CD4-positive, alpha-beta T cell (primary cell): ENCODE measurements at regions of chr1 and their contacts with region 1.

Region 1: GRCh38 chr1:65687428-65688214 is 105.1 kb upstream of the PDE4B start:
- DNase-seq: peak; percentile 58 to 83 (median 71)
- ATAC-seq: peak; percentile 82
- H3K4me3 ChIP-seq: no peak overlapping the region
- H3K4me3 Mint-ChIP-seq: no peak overlapping the region
- H3K27ac ChIP-seq: no peak overlapping the region
- H3K27ac Mint-ChIP-seq: no peak overlapping the region
- H3K4me1 ChIP-seq: peaks cover 7% of the 10 kb centered on the region
- H3K4me1 Mint-ChIP-seq: peaks cover 10% of the 10 kb centered on the region
- H3K27me3 ChIP-seq: no peaks in the 10 kb centered on the region
- H3K27me3 Mint-ChIP-seq: peaks cover 20% of the 10 kb centered on the region
- CTCF ChIP-seq: peak; percentile 97

Region 2: DNA sequence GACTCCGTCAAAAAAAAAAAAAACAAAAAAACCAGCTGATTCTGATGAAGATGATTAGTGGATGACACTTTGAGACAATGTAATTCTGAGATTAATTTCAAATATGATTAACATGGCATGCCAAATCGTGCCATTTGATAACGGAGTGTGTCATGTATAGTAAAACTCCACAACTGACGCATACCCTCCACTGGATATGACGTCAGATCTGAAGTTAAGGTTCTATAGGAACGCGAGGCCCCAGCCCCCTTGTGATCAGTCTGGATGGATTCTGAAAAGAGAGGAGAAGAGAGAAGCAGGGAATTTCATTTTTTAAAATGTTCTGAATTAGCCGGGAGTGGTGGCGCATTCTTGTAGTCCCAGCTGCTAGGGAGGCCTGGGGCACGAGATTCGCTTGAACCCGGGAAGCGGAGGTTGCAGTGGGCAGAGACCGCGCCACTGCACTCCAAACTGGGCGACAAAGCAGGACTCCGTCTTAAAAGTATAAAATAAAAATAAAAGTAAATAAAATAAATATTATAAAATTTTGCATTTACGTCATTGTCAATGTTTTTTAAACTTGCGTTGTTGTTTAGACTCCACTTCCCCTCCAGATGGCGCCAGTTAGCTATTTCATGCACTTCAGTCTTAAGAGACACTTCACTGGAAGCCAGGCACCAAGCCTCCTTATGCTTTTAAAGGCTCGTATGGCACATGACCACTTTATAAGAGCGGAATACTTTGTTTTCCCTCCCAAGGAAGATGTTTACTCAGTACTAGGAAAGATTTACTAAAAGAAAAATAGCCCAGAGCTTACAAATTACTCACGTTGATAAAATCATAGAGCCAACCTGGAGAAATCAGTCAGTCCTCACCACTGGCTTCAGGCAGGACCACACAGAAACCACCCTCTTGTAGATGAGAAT is 1418.7 kb before region 1 on chr1:
- CTCF ChIA-PET with region 1: interaction called, 5 read pairs
- POLR2A ChIA-PET with region 1: no interaction called
- intact Hi-C with region 1: loop called in 1 of 2 experiments (anchors 5 kb)
- DNase-seq: peak; percentile 19 to 83 (median 56)
- ATAC-seq: peak; percentile 71
- H3K4me3 ChIP-seq: no peak overlapping the region
- H3K4me3 Mint-ChIP-seq: no peak overlapping the region
- H3K27ac ChIP-seq: no peak overlapping the region
- H3K27ac Mint-ChIP-seq: no peak overlapping the region
- H3K4me1 ChIP-seq: no peaks in the 10 kb centered on the region
- H3K4me1 Mint-ChIP-seq: no peaks in the 10 kb centered on the region
- H3K27me3 ChIP-seq: peaks cover 0 to 10% of the 10 kb centered on the region in 2 experiments
- H3K27me3 Mint-ChIP-seq: peaks cover 45% of the 10 kb centered on the region
- CTCF ChIP-seq: peak; percentile 84

Region 3: DNA sequence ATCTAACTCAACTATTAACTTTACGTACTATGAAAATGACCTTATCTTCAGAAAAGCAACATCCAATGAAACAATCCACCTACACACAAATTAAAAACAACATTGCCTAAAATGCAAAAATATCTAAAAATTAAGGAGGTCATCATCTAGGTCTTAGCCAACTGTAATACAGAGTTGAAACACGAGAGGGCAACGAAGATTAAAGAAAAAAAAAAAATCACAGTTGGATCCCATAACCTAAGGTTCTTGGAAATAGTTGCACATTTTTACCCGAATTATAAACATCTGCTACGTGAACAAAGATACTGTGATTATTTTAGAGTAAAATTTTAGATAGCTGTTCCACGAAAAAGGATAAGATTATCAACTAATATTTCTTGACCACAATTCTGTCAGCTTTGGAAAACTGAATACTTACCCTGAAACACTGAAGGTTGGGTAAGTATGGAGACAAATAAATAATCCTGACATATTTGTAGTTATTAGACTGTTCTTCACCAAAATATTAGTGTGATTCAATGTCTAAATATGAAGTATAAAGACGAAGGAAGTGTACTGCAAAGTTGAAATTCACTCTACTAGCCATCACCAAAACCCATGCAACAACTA is 627.6 kb before region 1 on chr1:
- CTCF ChIA-PET with region 1: interaction called, 6 read pairs
- POLR2A ChIA-PET with region 1: no interaction called
- intact Hi-C with region 1: loop called (anchors 1 to 2 kb)
- DNase-seq: peak in 3 of 14 experiments; percentile 40 to 62 (median 61)
- ATAC-seq: peak; percentile 60
- H3K4me3 ChIP-seq: no peak overlapping the region
- H3K4me3 Mint-ChIP-seq: peak overlapping the region; percentile 1
- H3K27ac ChIP-seq: no peak overlapping the region
- H3K27ac Mint-ChIP-seq: peak overlapping the region; percentile 70
- H3K4me1 ChIP-seq: peaks cover 11% of the 10 kb centered on the region
- H3K4me1 Mint-ChIP-seq: peaks cover 63% of the 10 kb centered on the region
- H3K27me3 ChIP-seq: no peaks in the 10 kb centered on the region
- H3K27me3 Mint-ChIP-seq: no peaks in the 10 kb centered on the region
- CTCF ChIP-seq: peak; percentile 69

Region 4: DNA sequence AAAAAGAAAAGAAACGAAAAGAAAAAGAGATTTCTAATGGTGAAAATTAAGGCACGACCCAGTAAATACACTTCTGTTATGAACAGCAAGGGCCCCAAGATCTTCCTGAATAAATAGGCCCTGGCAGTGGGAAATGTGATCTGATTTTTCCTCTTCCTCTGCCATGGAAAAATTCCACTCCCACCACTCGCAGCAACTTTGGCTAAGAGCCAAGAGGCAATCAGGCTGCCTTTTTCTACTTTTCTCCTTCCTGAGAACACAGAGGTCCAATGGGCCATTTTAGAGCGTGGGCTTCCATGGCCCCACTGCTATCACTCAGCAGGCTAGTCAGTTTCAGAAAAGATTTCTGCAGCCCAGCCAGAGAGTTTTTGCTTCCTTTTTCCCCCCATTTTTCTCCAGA is 573.3 kb before region 1 on chr1:
- CTCF ChIA-PET with region 1: no interaction called
- POLR2A ChIA-PET with region 1: no interaction called
- intact Hi-C with region 1: no loop called
- DNase-seq: no peak
- ATAC-seq: no peak
- H3K4me3 ChIP-seq: no peak overlapping the region
- H3K4me3 Mint-ChIP-seq: no peak overlapping the region
- H3K27ac ChIP-seq: no peak overlapping the region
- H3K27ac Mint-ChIP-seq: no peak overlapping the region
- H3K4me1 ChIP-seq: no peaks in the 10 kb centered on the region
- H3K4me1 Mint-ChIP-seq: no peaks in the 10 kb centered on the region
- H3K27me3 ChIP-seq: no peaks in the 10 kb centered on the region
- H3K27me3 Mint-ChIP-seq: peaks cover 8% of the 10 kb centered on the region
- CTCF ChIP-seq: no peak

Region 5: GRCh38 chr1:65214340-65215027 is 473.1 kb before region 1 on chr1:
- CTCF ChIA-PET with region 1: interaction called, 6 read pairs
- POLR2A ChIA-PET with region 1: interaction called, 3 read pairs
- intact Hi-C with region 1: loop called (anchors 1 kb)
- DNase-seq: no peak
- ATAC-seq: no peak
- H3K4me3 ChIP-seq: no peak overlapping the region
- H3K4me3 Mint-ChIP-seq: no peak overlapping the region
- H3K27ac ChIP-seq: no peak overlapping the region
- H3K27ac Mint-ChIP-seq: no peak overlapping the region
- H3K4me1 ChIP-seq: no peaks in the 10 kb centered on the region
- H3K4me1 Mint-ChIP-seq: peaks cover 6% of the 10 kb centered on the region
- H3K27me3 ChIP-seq: no peaks in the 10 kb centered on the region
- H3K27me3 Mint-ChIP-seq: peaks cover under 1% of the 10 kb centered on the region
- CTCF ChIP-seq: no peak

Region 6: GRCh38 chr1:65431111-65431705 is 256.4 kb before region 1 on chr1:
- CTCF ChIA-PET with region 1: interaction called, 5 read pairs
- POLR2A ChIA-PET with region 1: no interaction called
- intact Hi-C with region 1: loop called (anchors 1 to 2 kb)
- DNase-seq: peak in 3 of 14 experiments; percentile 34 to 50 (median 44)
- ATAC-seq: peak; percentile 62
- H3K4me3 ChIP-seq: no peak overlapping the region
- H3K4me3 Mint-ChIP-seq: no peak overlapping the region
- H3K27ac ChIP-seq: no peak overlapping the region
- H3K27ac Mint-ChIP-seq: no peak overlapping the region
- H3K4me1 ChIP-seq: no peaks in the 10 kb centered on the region
- H3K4me1 Mint-ChIP-seq: peaks cover 11% of the 10 kb centered on the region
- H3K27me3 ChIP-seq: no peaks in the 10 kb centered on the region
- H3K27me3 Mint-ChIP-seq: no peaks in the 10 kb centered on the region
- CTCF ChIP-seq: peak; percentile 83

Region 7: DNA sequence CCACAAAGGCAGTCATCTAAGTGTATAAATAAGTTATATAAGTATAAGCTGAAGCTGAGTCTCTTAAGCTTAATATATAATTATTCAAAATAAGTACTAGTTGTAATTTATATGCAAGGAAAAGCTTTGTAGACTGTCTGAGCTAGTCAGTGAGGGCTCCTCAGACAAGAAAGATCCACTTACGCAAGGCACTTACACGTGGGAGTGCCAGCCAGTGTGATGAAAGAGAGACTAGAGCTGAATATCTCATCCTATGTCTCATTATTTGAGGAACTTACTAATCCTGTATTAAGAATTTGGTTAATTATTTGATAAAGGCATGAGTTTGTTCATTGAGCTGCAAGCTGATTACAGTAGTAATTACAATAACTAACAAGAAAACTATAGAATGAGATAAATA is 252.0 kb after region 1 on chr1:
- CTCF ChIA-PET with region 1: no interaction called
- POLR2A ChIA-PET with region 1: no interaction called
- intact Hi-C with region 1: no loop called
- DNase-seq: peak in 1 of 14 experiments; percentile 12
- ATAC-seq: no peak
- H3K4me3 ChIP-seq: no peak overlapping the region
- H3K4me3 Mint-ChIP-seq: no peak overlapping the region
- H3K27ac ChIP-seq: no peak overlapping the region
- H3K27ac Mint-ChIP-seq: no peak overlapping the region
- H3K4me1 ChIP-seq: no peaks in the 10 kb centered on the region
- H3K4me1 Mint-ChIP-seq: no peaks in the 10 kb centered on the region
- H3K27me3 ChIP-seq: no peaks in the 10 kb centered on the region
- H3K27me3 Mint-ChIP-seq: peaks cover 6% of the 10 kb centered on the region
- CTCF ChIP-seq: no peak